Activated CD8-positive, alpha-beta T cell treated with anti-CD3 and anti-CD28 coated beads for 36 hours (primary cell): ENCODE measurements at regions of chr10 and their contacts with region 1.

Region 1: GRCh38 chr10:76973515-76974278 is 663.9 kb downstream of the KCNMA1 start:
- DNase-seq: no peak
- ATAC-seq: no peak
- H3K4me3 Mint-ChIP-seq: no peak overlapping the region
- H3K27ac Mint-ChIP-seq: no peak overlapping the region
- H3K4me1 Mint-ChIP-seq: no peaks in the 10 kb centered on the region
- H3K27me3 Mint-ChIP-seq: peaks cover 2% of the 10 kb centered on the region
- CTCF ChIP-seq: no peak

Region 2: DNA sequence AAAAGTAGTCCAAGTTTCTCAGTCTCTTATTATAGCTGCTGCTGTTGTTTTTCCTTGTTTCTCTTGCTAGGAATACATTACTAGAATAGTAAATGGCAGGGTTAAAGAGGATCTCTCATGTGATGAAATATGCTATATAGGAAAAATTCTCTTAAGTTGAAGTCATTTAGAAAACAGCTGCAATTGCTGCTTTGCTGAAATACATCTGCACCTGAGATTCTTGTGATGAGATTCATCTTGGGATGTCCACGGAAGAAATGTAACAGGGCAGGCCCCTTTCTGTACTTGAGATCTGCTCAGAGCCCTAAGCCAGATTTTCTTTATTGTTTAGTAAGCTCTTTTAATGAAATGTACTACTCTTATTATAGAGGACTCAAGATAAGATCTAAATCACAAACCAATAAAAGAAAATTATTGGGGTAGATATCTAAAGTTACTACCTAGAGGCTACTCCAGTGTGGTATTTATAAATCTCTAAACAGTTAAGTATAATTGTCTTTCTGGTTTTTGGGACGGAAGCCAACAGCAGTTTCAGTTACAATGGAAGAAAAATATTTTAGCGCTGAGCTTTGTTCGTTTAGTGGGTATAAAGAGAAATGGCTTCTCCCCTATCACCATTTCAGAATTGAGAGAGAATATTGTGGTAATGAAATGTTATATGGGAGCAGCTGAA is 37.6 kb before region 1 on chr10:
- CTCF ChIA-PET with region 1: no interaction called
- POLR2A ChIA-PET with region 1: no interaction called
- intact Hi-C with region 1: no loop called
- DNase-seq: no peak
- ATAC-seq: no peak
- H3K4me3 Mint-ChIP-seq: no peak overlapping the region
- H3K27ac Mint-ChIP-seq: no peak overlapping the region
- H3K4me1 Mint-ChIP-seq: no peaks in the 10 kb centered on the region
- H3K27me3 Mint-ChIP-seq: peaks cover 5% of the 10 kb centered on the region
- CTCF ChIP-seq: no peak

Region 3: GRCh38 chr10:76984559-76985443 is 11.1 kb after region 1 on chr10:
- CTCF ChIA-PET with region 1: interaction called, 11 read pairs
- POLR2A ChIA-PET with region 1: no interaction called
- intact Hi-C with region 1: no loop called
- DNase-seq: peak; percentile 76
- ATAC-seq: peak; percentile 51
- H3K4me3 Mint-ChIP-seq: no peak overlapping the region
- H3K27ac Mint-ChIP-seq: no peak overlapping the region
- H3K4me1 Mint-ChIP-seq: no peaks in the 10 kb centered on the region
- H3K27me3 Mint-ChIP-seq: no peaks in the 10 kb centered on the region
- CTCF ChIP-seq: peak; percentile 90

Region 4: DNA sequence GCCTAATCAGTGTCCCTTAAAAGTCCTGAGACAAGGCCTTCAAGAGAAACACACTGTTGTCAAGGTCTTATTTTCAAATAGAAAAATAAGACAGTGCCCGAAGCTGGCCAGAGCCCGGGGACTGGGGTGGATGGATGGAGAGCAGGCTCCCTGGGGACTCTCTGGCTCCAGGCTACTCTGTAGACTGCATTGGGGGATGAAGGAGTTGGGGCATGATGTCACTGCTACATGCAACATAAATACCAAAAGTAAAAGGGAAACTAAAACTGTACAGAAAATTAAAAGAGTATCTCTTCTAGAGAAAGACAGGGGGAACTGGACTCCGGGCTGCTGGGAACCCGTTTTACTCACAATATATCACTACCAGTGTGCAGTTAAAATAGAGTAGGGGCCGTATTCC is 34.1 kb after region 1 on chr10:
- CTCF ChIA-PET with region 1: no interaction called
- POLR2A ChIA-PET with region 1: no interaction called
- intact Hi-C with region 1: no loop called
- DNase-seq: no peak
- ATAC-seq: no peak
- H3K4me3 Mint-ChIP-seq: no peak overlapping the region
- H3K27ac Mint-ChIP-seq: no peak overlapping the region
- H3K4me1 Mint-ChIP-seq: no peaks in the 10 kb centered on the region
- H3K27me3 Mint-ChIP-seq: no peaks in the 10 kb centered on the region
- CTCF ChIP-seq: no peak